ENCODE measurements at regions of chr4 and their contacts with region 1.

Region 1: GRCh38 chr4:173505924-173506518 is 24.0 kb downstream of the HAND2 start:
- DNase-seq: peak; percentile 82

Region 2: DNA sequence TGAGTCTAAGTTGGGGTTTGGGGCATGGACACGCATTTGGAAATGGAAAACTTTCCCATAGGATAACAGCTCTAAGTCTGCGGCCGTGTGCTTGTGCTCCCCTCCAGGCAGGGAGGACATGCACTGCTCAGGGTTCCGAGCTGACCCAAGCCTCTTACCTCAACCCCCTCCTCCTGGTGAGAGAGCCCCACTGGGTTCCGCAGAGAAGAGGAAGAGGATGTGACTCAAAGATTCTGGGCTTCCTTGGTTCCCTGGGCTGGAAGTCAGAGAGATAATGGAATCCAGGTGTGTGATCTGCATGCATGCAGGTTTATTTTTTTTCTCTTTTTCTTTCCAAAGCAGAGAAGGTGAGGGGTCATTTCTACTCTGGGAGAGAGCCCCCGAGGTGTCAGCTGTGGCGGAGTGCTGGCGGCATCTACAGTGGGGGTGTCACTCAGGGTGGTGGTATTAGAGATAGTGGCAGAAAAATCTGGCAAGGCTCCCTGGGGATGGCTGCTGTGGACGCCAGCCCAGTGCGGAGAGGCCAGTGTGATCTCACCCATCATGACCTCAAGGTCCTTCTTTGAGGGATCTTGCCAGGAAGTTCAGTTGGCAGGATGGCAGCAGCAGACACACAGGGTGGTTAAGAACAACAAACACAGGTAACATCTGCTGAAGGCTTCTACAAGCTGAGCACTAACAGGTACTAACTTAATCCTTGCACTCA is 192.7 kb after region 1 on chr4:
- intact Hi-C with region 1: loop called (anchors 2 kb)
- DNase-seq: peak; percentile 88

Region 3: DNA sequence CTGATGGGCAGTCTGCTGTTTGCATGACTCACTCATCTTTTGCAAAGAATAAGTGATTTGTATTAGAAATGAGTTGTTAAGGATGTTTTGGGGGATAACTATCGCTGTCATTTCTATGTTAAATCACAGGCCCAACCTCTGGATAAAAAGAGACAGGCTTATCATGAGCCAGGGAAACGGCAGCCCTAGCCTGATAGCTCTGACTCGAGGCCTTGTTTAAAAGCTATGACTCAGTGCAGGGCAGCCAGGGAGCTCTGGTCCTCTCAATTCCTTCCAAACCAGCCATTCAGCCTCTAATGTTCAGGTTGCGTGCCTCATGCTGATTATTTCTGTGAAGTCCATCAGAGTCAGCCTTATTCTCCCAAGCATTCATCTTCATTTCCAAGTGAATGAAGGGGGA is 329.9 kb after region 1 on chr4:
- intact Hi-C with region 1: loop called (anchors 10 kb)
- DNase-seq: no peak

Region 4: DNA sequence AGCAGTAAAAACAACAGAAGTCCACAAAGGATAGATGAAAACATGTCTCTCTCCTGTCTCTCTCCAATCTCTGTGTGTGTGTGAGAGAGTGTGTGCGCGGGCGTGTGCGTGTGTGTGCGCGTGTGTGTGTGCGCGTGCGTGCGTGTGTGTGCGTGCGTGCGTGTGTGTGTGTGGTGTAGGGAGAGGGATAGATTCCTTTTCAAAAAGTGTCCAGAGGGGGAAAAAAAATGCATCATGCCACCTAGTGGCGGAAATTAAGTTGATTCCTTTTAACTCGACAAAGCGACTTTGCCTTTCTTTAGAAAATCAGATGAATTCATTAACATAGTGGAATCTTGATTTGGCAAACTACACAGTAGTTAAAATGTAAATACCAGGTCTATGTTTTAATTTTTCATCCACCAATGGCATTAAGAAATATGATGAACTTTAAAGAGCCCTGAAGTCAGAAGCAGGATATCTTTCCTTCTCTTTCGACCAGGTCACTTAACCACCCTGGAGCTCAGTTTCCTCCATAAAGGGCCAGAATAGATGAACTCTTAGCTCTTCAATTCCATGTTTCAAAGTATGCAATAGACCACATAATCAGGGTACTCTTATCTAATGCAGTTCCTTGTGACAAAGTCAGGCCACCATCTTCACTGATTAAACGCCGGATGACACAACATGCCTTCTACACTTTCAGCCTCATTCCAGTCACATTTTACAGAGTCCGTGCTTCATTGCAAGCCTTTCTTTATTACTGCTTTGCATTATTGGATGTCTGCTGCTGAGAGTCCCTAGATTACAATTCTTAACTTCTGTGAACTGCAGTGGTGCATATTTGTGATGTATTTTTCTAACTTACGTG is 614.6 kb after region 1 on chr4:
- intact Hi-C with region 1: loop called (anchors 5 kb)
- DNase-seq: no peak

Region 5: DNA sequence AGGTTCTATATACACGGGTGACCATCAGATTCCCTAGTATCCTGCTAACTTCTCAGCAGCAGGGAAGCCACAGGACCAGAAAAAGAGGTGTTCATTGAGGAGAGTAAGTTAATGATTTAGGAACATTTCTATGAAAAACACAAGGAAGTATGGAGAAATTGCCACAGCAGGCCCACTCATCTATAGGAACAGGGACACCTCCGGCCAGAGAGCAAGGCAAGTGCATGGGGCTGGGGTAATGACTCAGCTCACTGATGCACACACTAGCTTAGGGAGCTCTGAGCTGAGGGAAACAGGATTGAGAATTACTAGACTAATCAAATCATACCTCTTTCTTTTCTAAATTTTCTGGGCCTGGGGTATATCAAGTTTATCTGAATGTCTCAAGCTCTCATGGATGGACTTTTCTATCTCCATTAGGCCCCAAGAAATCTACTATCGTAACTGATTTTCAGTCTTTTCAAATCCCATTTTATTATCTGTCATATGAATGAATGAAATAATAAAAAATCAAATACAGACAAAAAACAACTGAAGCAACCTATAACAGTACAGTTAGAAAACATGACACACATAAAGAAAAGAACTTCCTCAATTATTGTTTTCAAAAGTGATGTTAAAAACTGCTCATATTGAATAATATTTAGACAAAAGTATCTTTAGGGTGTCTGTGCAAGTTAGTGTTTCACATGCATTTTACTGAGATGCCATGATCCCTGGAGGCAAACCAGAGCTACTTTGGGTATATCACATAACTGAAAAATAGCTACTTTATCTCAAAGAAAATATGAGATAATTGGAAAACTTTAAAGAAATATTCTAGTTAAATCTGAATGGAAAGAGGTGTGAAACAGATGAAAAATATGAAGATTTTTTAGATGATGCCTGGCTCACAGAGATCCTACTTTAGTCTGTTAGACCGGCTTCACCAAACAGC is 687.7 kb after region 1 on chr4:
- intact Hi-C with region 1: no loop called
- DNase-seq: no peak

Region 6: DNA sequence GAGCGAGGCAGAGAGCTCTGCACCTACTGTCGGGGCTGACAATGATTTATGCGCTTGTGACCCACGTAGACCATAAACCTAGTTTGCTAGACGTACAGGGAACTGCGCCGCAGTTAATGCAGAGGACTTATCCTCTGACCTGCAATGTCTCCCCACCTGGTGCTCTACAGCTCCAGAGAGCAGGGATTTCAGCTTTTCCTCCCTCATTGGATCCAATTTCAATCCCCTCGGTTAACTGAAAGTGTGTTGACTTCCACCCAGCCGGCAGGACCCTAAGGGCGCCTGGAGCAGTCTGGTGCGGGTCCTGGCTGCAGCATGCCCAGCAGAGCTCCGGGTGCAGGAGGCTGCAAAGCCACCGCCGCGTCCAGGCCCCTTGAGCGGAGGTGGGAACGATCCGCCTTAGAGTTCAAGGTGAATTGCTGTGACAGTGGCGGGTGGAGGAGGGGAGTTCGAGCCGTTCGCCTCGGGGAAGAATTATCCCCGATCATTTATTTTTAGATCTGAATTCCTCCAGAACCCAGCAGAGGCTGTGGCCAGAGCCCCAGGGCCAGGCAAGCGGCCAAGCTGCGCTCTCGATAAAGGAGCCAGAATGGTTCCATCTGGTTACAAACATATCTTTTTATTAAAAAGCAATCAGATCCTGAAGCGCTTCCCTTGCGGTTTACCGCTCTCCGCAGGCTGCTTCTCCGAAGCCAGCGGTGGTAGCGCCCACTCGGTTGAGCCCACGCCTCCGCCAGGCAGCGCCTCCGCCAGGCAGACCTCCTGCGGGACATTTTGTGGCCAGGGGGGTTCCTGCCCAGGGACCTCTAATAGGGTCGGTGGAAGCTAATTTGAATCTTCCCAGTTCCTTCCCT is 711.5 kb after region 1 on chr4:
- intact Hi-C with region 1: loop called (anchors 5 kb)
- DNase-seq: peak; percentile 77